Posterior vena cava (tissue), 2 donors: ENCODE measurements at regions of chr6 and their contacts with region 1.

Region 1: GRCh38 chr6:95145457-95145856 is 431.9 kb upstream of the MANEA start:
- DNase-seq: no peak

Region 2: DNA sequence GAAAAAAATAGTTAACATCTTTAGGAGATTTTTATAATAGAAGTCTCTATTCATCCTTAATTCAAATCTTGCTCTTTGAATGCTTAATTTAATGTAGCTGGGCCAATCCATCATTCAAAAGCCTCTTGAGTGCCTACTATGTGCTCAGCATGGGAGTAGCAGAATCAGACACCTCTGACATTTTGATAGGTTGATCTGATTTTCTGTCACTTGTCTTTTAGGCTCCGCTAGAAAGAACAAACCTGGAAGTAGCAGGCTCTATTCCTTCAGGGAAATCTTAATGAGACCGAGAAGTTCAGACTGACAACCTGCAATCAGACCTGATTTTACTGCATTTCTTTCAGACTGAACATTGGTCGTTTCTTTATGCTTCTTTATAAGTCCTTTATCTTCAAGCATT is 156.8 kb before region 1 on chr6:
- intact Hi-C with region 1: no loop called
- DNase-seq: no peak

Region 3: GRCh38 chr6:96022225-96022624 is 876.8 kb after region 1 on chr6:
- intact Hi-C with region 1: loop called in 1 of 2 experiments (anchors 5 kb)
- DNase-seq: no peak